Natural killer cell (primary cell): ENCODE measurements at regions of chr9 and their contacts with region 1.

Region 1: GRCh38 chr9:16275795-16276624 is 594.5 kb downstream of the BNC2 start:
- DNase-seq: no peak
- ATAC-seq: no peak
- H3K4me3 ChIP-seq: no peak overlapping the region
- H3K4me3 Mint-ChIP-seq: no peak overlapping the region
- H3K27ac ChIP-seq: no peak overlapping the region
- H3K27ac Mint-ChIP-seq: no peak overlapping the region
- H3K4me1 ChIP-seq: no peaks in the 10 kb centered on the region
- H3K4me1 Mint-ChIP-seq: no peaks in the 10 kb centered on the region
- H3K27me3 ChIP-seq: no peaks in the 10 kb centered on the region
- H3K27me3 Mint-ChIP-seq: no peaks in the 10 kb centered on the region
- CTCF ChIP-seq: no peak

Region 2: DNA sequence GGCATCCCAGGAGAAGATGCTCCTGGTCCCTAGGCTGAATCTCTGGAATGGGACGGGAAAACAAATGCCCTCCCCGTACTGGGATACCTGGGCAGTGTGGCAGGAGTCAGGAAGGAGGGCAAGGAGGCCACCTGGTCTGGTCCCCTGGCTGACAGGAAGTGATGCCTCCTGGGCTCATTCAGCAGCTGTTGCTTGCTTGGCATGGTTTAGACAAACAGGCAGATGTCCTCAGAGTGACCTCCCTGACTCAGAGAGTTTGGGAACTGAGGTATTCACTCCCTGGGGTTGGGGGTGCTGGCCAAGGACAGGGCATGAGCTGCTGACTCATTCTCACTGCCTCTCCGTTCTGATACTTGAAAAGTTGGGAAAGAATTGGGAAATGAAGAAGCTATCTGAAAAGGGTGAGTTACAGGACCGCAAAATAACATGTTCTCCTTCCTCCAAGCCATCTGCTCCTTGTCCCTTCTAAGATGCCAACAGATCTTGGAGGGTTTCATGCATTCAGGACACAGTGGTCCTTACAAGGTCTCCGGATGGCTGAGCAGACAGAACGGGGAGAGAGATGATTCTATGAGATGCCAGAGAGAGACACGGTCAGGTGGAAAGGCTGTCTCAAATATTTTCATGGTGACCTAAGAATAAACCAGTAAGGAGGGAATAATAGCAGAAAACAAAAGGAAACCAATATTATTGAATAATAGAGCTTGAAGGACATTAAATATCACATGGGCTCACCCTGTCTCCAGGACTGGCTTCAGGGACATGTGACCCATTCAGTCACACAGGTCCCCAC is 60.0 kb after region 1 on chr9:
- intact Hi-C with region 1: loop called (anchors 10 kb)
- DNase-seq: no peak
- ATAC-seq: no peak
- H3K4me3 ChIP-seq: no peak overlapping the region
- H3K4me3 Mint-ChIP-seq: no peak overlapping the region
- H3K27ac ChIP-seq: no peak overlapping the region
- H3K27ac Mint-ChIP-seq: no peak overlapping the region
- H3K4me1 ChIP-seq: no peaks in the 10 kb centered on the region
- H3K4me1 Mint-ChIP-seq: no peaks in the 10 kb centered on the region
- H3K27me3 ChIP-seq: no peaks in the 10 kb centered on the region
- H3K27me3 Mint-ChIP-seq: peaks cover 8 to 9% of the 10 kb centered on the region in 2 donors
- CTCF ChIP-seq: no peak

Region 3: DNA sequence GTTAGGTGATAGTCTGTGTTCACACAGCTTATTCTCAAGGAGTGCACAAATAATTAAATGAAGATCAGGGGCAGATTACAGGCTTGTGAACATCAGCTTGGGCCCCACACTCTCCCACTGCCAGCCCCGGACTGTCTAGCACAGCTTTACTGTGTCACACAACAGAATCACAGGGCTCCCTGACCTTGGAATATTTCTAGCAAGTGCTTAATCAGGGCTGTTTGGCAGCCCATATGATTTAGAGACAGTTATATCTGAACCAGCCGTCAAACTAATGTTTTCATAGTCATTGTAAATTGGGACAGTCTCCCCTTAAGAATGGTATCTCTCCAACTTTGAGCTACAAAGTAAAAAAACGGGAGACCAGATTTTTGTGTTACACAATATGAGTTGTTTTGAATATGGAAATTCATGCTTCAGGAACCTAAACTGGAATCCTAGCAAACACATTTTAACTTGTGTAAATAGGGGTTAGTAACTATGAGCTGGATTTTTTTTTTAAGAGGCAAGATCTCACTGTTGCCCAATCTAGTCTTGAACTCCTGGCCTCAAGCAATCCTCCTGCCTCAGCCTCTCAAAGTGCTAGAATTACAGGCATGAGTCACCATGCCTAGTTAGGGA is 76.9 kb after region 1 on chr9:
- intact Hi-C with region 1: no loop called
- DNase-seq: no peak
- ATAC-seq: no peak
- H3K4me3 ChIP-seq: no peak overlapping the region
- H3K4me3 Mint-ChIP-seq: no peak overlapping the region
- H3K27ac ChIP-seq: no peak overlapping the region
- H3K27ac Mint-ChIP-seq: no peak overlapping the region
- H3K4me1 ChIP-seq: no peaks in the 10 kb centered on the region
- H3K4me1 Mint-ChIP-seq: no peaks in the 10 kb centered on the region
- H3K27me3 ChIP-seq: no peaks in the 10 kb centered on the region
- H3K27me3 Mint-ChIP-seq: no peaks in the 10 kb centered on the region
- CTCF ChIP-seq: no peak